Activated naive CD4-positive, alpha-beta T cell treated with anti-CD3 and anti-CD28 coated beads for 36 hours (primary cell): ENCODE measurements at regions of chr6 and their contacts with region 1.

Region 1: DNA sequence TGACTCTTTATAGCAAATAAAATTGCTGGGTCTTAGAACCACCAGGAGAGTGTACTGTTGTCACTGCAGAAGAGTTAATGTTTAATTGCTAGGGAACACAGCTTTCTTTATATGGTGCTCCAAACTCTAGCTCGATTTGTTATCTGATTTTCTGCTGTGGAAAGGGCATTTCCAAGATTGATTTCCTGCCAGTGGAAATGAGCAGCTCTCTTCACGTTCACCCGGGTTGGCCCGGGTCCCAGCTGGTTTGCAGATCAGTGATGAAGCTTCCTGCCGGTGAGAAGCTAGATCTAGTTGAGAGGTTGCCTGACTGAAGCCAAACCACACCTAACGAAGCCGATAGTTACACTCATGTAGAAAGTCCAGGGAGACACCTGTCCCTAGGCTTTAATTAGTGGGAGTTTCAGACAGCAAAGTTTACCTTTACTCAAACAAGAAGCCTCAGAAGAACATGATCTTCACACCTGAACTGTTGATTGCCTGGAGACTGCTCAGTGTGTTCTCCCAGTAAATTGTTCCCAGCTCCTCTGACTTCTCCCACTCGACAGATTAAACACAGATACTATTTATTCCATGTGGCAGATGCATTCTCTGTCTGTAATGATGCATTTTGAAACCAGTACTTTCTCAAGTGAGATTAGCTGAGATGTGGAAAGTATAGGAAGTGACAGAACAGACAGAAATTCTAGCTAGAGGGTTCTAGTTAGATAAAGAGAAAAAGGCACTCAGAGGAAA is 27.8 kb downstream of the PAQR8 start:
- DNase-seq: peak; percentile 79
- H3K4me3 Mint-ChIP-seq: peak overlapping the region; percentile 14
- H3K27ac Mint-ChIP-seq: peak overlapping the region; percentile 81
- H3K4me1 Mint-ChIP-seq: peaks cover 75% of the 10 kb centered on the region
- H3K27me3 Mint-ChIP-seq: no peaks in the 10 kb centered on the region

Region 2: DNA sequence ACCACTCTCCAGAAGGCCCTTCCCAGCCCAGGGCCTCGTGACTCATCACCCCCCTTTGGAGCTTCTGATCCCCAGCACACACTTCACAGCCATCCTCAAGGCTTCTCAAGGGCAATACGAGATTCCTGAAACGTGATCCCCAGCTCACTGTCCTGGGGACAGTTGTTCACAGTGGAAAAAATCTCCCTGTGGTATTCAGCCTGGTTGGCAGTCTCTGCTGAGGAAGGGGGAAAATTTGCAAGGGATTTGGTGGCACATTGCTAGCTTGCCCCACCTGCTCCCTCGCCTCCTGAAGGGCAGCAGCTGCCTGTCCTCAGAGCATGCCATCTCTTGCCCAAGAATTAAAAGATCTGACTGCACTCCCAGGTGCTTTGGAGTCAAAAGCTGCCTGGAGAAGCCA is 281.7 kb before region 1 on chr6:
- CTCF ChIA-PET with region 1: no interaction called
- intact Hi-C with region 1: no loop called
- DNase-seq: no peak
- H3K4me3 Mint-ChIP-seq: no peak overlapping the region
- H3K27ac Mint-ChIP-seq: no peak overlapping the region
- H3K4me1 Mint-ChIP-seq: no peaks in the 10 kb centered on the region
- H3K27me3 Mint-ChIP-seq: peaks cover 27% of the 10 kb centered on the region

Region 3: DNA sequence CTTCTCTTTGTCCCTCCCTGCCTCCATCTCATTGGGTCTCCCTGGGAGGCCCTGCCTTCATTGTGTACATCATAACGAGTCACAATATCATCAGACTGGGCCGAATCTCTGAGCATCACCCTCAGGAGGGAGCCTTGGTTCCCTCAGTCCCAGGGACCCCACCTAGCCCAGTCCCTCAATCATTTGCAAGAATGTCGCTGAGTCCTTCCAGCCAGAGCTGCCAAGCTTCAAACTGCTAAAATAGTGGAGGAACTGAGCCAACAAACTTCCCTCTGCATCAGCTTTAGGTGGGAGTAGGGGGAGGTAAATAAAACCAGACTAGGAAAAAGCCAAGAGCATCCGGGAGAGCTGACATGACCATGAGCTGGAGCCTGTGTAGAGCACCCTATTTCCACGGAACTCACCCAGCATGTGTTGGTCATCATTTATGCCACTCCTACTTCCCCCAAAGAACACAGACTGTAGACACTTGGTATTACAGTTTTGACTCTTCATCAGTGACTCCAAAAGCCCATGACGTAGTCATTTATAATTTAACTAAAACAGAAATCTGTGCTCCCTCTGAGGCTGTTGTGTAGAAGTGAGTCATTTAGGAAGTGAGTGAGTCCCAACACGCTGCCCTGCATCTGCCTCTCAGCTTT is 232.4 kb before region 1 on chr6:
- CTCF ChIA-PET with region 1: interaction called, 4 read pairs
- intact Hi-C with region 1: loop called (anchors 1 kb)
- DNase-seq: peak; percentile 50
- H3K4me3 Mint-ChIP-seq: no peak overlapping the region
- H3K27ac Mint-ChIP-seq: peak overlapping the region; percentile 74
- H3K4me1 Mint-ChIP-seq: peaks cover 53% of the 10 kb centered on the region
- H3K27me3 Mint-ChIP-seq: peaks cover 22% of the 10 kb centered on the region

Region 4: GRCh38 chr6:52227495-52227894 is 162.3 kb before region 1 on chr6:
- CTCF ChIA-PET with region 1: no interaction called
- intact Hi-C with region 1: loop called (anchors 1 kb)
- DNase-seq: peak; percentile 91
- H3K4me3 Mint-ChIP-seq: no peak overlapping the region
- H3K27ac Mint-ChIP-seq: no peak overlapping the region
- H3K4me1 Mint-ChIP-seq: peaks cover 18% of the 10 kb centered on the region
- H3K27me3 Mint-ChIP-seq: peaks cover 24% of the 10 kb centered on the region

Region 5: DNA sequence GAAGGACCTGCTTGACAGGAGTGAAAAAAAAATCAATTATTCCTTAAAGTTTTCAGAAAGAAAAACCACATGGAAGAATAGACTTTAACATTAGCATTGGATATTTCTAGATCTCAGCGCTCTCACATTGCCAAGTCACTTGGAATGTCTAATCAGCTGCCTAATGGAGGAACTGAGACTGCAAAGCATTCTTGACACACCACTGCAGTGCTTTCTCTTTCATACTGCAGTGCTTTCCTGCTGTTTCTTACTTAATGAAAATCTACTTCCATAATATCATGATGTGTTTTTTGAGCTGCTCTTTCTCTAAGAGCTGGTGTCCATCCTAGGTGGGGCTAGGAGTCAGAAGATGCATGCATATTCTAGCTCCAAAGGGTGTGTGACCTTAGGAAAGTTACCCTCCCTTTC is 84.8 kb before region 1 on chr6:
- CTCF ChIA-PET with region 1: interaction called, 8 read pairs
- intact Hi-C with region 1: loop called (anchors 1 kb)
- DNase-seq: no peak
- H3K4me3 Mint-ChIP-seq: peak overlapping the region; percentile 27
- H3K27ac Mint-ChIP-seq: peak overlapping the region; percentile 77
- H3K4me1 Mint-ChIP-seq: peaks cover 65% of the 10 kb centered on the region
- H3K27me3 Mint-ChIP-seq: no peaks in the 10 kb centered on the region

Region 6: DNA sequence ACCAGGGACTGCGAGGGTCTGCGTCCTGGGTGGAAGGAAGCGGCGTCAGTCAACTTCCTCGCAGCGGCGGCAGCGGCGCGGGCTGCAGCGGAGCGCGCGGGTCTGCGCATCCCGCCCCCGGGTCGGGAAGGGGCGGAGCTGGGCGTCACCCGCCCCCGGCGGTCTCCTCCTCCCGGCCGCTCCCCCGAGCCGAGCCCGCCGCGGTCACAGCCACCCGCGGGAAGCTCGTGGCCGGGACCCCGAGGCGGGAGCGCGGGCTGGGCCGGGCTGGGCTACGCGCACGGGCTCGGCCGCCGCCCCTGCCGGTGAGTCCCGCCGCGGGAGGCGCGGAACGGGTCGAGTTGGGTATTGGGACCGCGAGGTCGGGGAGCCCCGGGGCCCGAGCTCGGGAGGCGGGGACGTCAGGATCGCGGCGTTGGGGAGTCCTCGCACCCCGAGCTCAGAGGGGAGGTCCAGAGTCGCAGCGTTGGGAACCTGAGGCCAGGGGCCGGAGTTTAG is 27.8 kb before region 1 on chr6 and contains the start of gene PAQR8:
- CTCF ChIA-PET with region 1: interaction called, 7 read pairs
- intact Hi-C with region 1: loop called (anchors 1 kb)
- DNase-seq: peak; percentile 81
- H3K4me3 Mint-ChIP-seq: peak within 1 kb of the TSS; percentile 94
- H3K27ac Mint-ChIP-seq: peak within 1 kb of the TSS; percentile 91
- H3K4me1 Mint-ChIP-seq: peaks cover 38% of the 10 kb centered on the region
- H3K27me3 Mint-ChIP-seq: no peaks in the 10 kb centered on the region
- total RNA-seq, gene PAQR8: 6.8 to 9.2 TPM

Region 7: DNA sequence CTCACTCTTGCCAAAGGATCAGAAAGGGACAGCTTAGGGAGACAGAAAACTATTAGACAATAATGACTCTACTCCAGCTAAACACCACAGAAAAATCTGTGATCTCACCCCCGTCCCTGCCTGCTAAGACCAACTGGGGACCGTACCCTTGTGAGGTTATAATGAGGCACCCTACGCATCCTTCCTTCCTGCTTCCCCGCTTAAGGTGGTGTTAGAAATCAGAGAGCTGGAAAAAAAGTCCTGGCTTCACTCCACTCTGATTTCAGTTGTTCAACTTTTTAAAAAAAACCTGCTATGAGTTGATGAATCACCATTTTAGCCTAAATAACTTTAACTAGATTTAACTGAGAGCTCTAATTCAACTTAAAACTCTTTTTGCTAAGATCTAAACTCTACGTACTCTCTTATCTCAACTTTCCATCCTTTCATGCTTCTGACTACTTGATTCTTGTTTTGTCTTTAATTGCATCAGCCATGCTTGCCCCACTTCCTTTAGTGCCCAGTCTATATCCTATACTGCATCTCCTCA is 245.3 kb after region 1 on chr6:
- CTCF ChIA-PET with region 1: no interaction called
- intact Hi-C with region 1: loop called (anchors 1 kb)
- DNase-seq: peak; percentile 75
- H3K4me3 Mint-ChIP-seq: peak overlapping the region; percentile 25
- H3K27ac Mint-ChIP-seq: peak overlapping the region; percentile 67
- H3K4me1 Mint-ChIP-seq: peaks cover 18% of the 10 kb centered on the region
- H3K27me3 Mint-ChIP-seq: peaks cover 5% of the 10 kb centered on the region

Region 8: DNA sequence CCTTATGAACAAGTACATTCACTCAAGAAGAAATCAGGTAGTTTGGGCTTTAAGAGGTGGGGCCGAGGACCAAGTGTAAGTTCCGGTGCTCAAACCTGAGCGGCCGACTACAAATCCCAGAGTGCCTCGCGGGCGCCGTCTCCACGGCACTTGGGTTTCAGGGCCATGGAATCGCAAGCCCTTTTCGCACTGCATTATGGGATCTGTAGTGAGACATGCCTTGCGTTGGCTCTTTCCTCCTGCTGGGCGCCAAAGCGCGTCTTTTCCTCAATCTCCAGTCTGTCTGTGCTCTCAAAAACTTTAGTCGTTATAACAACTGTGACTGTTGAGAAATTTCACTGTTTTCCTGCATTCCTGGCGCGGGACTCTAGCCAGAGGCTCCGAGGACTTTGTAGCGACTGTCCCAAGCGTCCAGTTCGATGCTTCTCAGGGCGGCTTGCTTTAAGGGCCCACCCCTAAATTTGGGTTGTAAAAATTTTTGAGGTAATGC is 675.0 kb after region 1 on chr6:
- CTCF ChIA-PET with region 1: no interaction called
- intact Hi-C with region 1: loop called (anchors 2 kb)
- DNase-seq: peak; percentile 99
- H3K4me3 Mint-ChIP-seq: peak overlapping the region; percentile 97
- H3K27ac Mint-ChIP-seq: peak overlapping the region; percentile 99
- H3K4me1 Mint-ChIP-seq: peaks cover 55% of the 10 kb centered on the region
- H3K27me3 Mint-ChIP-seq: no peaks in the 10 kb centered on the region